GM12878 (cell line): ENCODE measurements at regions of chr10 and their contacts with region 1.

Region 1: GRCh38 chr10:89369156-89370105 is 8.4 kb upstream of the IFIT1B start:
- DNase-seq: no peak
- ATAC-seq: peak; percentile 57
- H3K4me3 ChIP-seq: no peak overlapping the region
- H3K27ac ChIP-seq: peak overlapping the region; percentile 10; the same call in 1 of the 2 replicates
- H3K4me1 ChIP-seq: peaks cover 25% of the 10 kb centered on the region
- H3K27me3 ChIP-seq: no peaks in the 10 kb centered on the region
- CTCF ChIP-seq: peak; percentile 48 to 66 (median 53); a peak in 5 of 6 replicates
- EP300 ChIP-seq: no peak
- POLR2A ChIP-seq: no peak
- RAD21 ChIP-seq: peak; percentile 76

Region 2: GRCh38 chr10:89147256-89147655 is 222.2 kb before region 1 on chr10:
- CTCF ChIA-PET with region 1: no interaction called
- POLR2A ChIA-PET with region 1: no interaction called
- RAD21 ChIA-PET with region 1: no interaction called
- SMC1A ChIA-PET with region 1: no interaction called
- in situ Hi-C with region 1: no loop called
- intact Hi-C with region 1: no loop called
- DNase-seq: no peak
- ATAC-seq: no peak
- H3K4me3 ChIP-seq: no peak overlapping the region
- H3K27ac ChIP-seq: no peak overlapping the region
- H3K4me1 ChIP-seq: no peaks in the 10 kb centered on the region
- H3K27me3 ChIP-seq: no peaks in the 10 kb centered on the region
- CTCF ChIP-seq: no peak
- EP300 ChIP-seq: no peak
- POLR2A ChIP-seq: no peak
- RAD21 ChIP-seq: no peak

Region 3: DNA sequence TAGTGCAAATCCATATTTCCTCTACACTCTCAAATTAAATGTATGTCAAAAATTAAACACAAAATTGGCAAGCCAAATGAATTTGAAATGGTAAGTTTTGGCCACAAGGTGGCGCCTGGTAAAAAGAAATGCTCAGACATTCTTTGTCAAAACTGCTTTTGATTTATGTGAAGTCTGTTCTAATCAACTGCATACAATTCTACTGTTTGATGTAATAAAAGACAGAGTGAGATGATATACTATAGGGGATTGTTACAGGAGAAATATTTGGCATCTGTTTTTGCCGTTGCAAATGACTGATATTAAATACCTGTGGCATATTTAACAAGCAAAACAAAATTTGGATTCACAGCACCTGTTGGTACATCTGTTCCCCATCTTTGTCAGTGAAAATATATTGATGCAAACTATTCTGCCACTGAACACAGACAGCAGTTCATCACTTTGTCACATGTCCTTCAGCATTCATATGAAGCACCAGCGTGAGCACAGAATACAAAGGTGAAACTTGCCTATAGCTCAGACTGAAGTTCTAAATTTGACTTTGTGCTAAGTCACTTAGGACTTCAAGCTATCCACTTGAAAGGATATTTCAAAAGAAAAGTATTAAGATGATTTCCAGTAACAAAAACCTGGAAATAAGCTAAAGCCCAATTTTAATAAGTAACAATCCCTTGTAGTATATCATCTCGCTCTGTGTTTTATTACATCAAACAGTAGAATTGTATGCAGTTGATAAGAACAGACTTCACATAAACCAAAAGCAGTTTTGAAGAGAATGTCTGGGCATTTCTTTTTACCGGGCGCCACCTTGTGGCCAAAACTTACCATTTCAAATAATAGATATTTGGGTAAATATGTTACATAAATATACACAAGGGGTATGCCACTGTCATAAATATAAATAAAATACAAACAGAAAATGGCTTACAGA is 152.1 kb before region 1 on chr10:
- CTCF ChIA-PET with region 1: interaction called, 36 read pairs
- POLR2A ChIA-PET with region 1: no interaction called
- RAD21 ChIA-PET with region 1: interaction called, 12 read pairs
- SMC1A ChIA-PET with region 1: interaction called, 23 read pairs
- in situ Hi-C with region 1: no loop called
- intact Hi-C with region 1: no loop called
- DNase-seq: peak; percentile 12
- ATAC-seq: peak; percentile 83
- H3K4me3 ChIP-seq: no peak overlapping the region
- H3K27ac ChIP-seq: no peak overlapping the region
- H3K4me1 ChIP-seq: peaks cover 3% of the 10 kb centered on the region; the same call in 1 of the 2 replicates
- H3K27me3 ChIP-seq: no peaks in the 10 kb centered on the region
- CTCF ChIP-seq: peak; percentile 50 to 66 (median 64)
- EP300 ChIP-seq: no peak
- POLR2A ChIP-seq: no peak
- RAD21 ChIP-seq: peak; percentile 77

Region 4: GRCh38 chr10:89269433-89270152 is 99.8 kb before region 1 on chr10:
- CTCF ChIA-PET with region 1: interaction called, 15 read pairs
- POLR2A ChIA-PET with region 1: no interaction called
- RAD21 ChIA-PET with region 1: interaction called, 6 read pairs
- SMC1A ChIA-PET with region 1: interaction called, 25 read pairs
- in situ Hi-C with region 1: no loop called
- intact Hi-C with region 1: no loop called
- DNase-seq: no peak
- ATAC-seq: no peak
- H3K4me3 ChIP-seq: no peak overlapping the region
- H3K27ac ChIP-seq: no peak overlapping the region
- H3K4me1 ChIP-seq: no peaks in the 10 kb centered on the region
- H3K27me3 ChIP-seq: no peaks in the 10 kb centered on the region
- CTCF ChIP-seq: no peak
- EP300 ChIP-seq: no peak
- POLR2A ChIP-seq: no peak
- RAD21 ChIP-seq: no peak

Region 5: GRCh38 chr10:89301721-89302445 is 67.5 kb before region 1 on chr10 and contains the start of gene IFIT2:
- CTCF ChIA-PET with region 1: interaction called, 95 read pairs
- POLR2A ChIA-PET with region 1: interaction called, 9 read pairs
- RAD21 ChIA-PET with region 1: interaction called, 68 read pairs
- SMC1A ChIA-PET with region 1: interaction called, 98 read pairs
- in situ Hi-C with region 1: no loop called
- intact Hi-C with region 1: no loop called
- DNase-seq: peak; percentile 66
- ATAC-seq: peak; percentile 88
- H3K4me3 ChIP-seq: peak within 1 kb of the TSS; percentile 79
- H3K27ac ChIP-seq: peak within 1 kb of the TSS; percentile 64
- H3K4me1 ChIP-seq: peaks cover 3% of the 10 kb centered on the region
- H3K27me3 ChIP-seq: no peaks in the 10 kb centered on the region
- CTCF ChIP-seq: no peak
- EP300 ChIP-seq: no peak
- POLR2A ChIP-seq: peak; percentile 81
- RAD21 ChIP-seq: no peak
- polyA plus RNA-seq, gene IFIT2: 11.8 to 14.8 TPM

Region 6: GRCh38 chr10:89342206-89342958 is 27.0 kb before region 1 on chr10:
- CTCF ChIA-PET with region 1: interaction called, 39 read pairs
- POLR2A ChIA-PET with region 1: interaction called, 4 read pairs
- RAD21 ChIA-PET with region 1: interaction called, 23 read pairs
- SMC1A ChIA-PET with region 1: interaction called, 97 read pairs
- in situ Hi-C with region 1: no loop called
- intact Hi-C with region 1: no loop called
- DNase-seq: no peak
- ATAC-seq: peak; percentile 25; the same call in 2 of the 3 replicates
- H3K4me3 ChIP-seq: no peak overlapping the region
- H3K27ac ChIP-seq: no peak overlapping the region
- H3K4me1 ChIP-seq: peaks cover 5% of the 10 kb centered on the region
- H3K27me3 ChIP-seq: no peaks in the 10 kb centered on the region
- CTCF ChIP-seq: no peak
- EP300 ChIP-seq: no peak
- POLR2A ChIP-seq: 0 out of 2 replicates have a peak, but pooled peaks have one; percentile 37
- RAD21 ChIP-seq: no peak

Region 7: GRCh38 chr10:89391917-89392756 is 22.7 kb after region 1 on chr10 and contains the start of gene IFIT1:
- CTCF ChIA-PET with region 1: interaction called, 97 read pairs
- POLR2A ChIA-PET with region 1: interaction called, 10 read pairs
- RAD21 ChIA-PET with region 1: interaction called, 18 read pairs
- SMC1A ChIA-PET with region 1: interaction called, 42 read pairs
- in situ Hi-C with region 1: no loop called
- intact Hi-C with region 1: no loop called
- DNase-seq: peak; percentile 80
- ATAC-seq: peak; percentile 94
- H3K4me3 ChIP-seq: peak within 1 kb of the TSS; percentile 67
- H3K27ac ChIP-seq: peak within 1 kb of the TSS; percentile 71
- H3K4me1 ChIP-seq: no peaks in the 10 kb centered on the region; the same call in 1 of the 2 replicates
- H3K27me3 ChIP-seq: no peaks in the 10 kb centered on the region
- CTCF ChIP-seq: no peak
- EP300 ChIP-seq: no peak
- POLR2A ChIP-seq: peak; percentile 63
- RAD21 ChIP-seq: no peak
- polyA plus RNA-seq, gene IFIT1: 28.9 to 37.2 TPM

Region 8: GRCh38 chr10:89563861-89564478 is 194.5 kb after region 1 on chr10:
- CTCF ChIA-PET with region 1: interaction called, 7 read pairs
- POLR2A ChIA-PET with region 1: no interaction called
- RAD21 ChIA-PET with region 1: interaction called, 5 read pairs
- SMC1A ChIA-PET with region 1: interaction called, 10 read pairs
- in situ Hi-C with region 1: no loop called
- intact Hi-C with region 1: loop called (anchors 5 kb)
- DNase-seq: peak; percentile 3
- ATAC-seq: peak; percentile 82
- H3K4me3 ChIP-seq: no peak overlapping the region
- H3K27ac ChIP-seq: no peak overlapping the region
- H3K4me1 ChIP-seq: no peaks in the 10 kb centered on the region
- H3K27me3 ChIP-seq: no peaks in the 10 kb centered on the region
- CTCF ChIP-seq: peak; percentile 51 to 57 (median 57)
- EP300 ChIP-seq: no peak
- POLR2A ChIP-seq: no peak
- RAD21 ChIP-seq: peak; percentile 87